Heart left ventricle (tissue), 16 donors: ENCODE measurements at regions of chr4 and their contacts with region 1.

Region 1: GRCh38 chr4:40149960-40150385 is 46.9 kb upstream of the RHOH start:
- DNase-seq: peak in 4 of 5 donors; percentile 35 to 45 (median 38)
- ATAC-seq: peak in 3 of 4 donors; percentile 61 to 73 (median 69)
- H3K4me3 ChIP-seq: no peak overlapping the region
- H3K27ac ChIP-seq: no peak overlapping the region
- H3K4me1 ChIP-seq: peaks cover 0 to 6% (median 0%) of the 10 kb centered on the region in 12 donors
- H3K27me3 ChIP-seq: no peaks in the 10 kb centered on the region
- CTCF ChIP-seq: peak; percentile 73 to 94 (median 85)
- POLR2A ChIP-seq: no peak

Region 2: GRCh38 chr4:40719008-40719623 is 569.1 kb after region 1 on chr4:
- intact Hi-C with region 1: loop called in 1 of 10 experiments (anchors 10 kb)
- DNase-seq: no peak
- ATAC-seq: no peak
- H3K4me3 ChIP-seq: no peak overlapping the region
- H3K27ac ChIP-seq: no peak overlapping the region
- H3K4me1 ChIP-seq: peaks cover 0 to 45% (median 0%) of the 10 kb centered on the region in 12 donors
- H3K27me3 ChIP-seq: peaks cover 0 to 15% (median 0%) of the 10 kb centered on the region in 9 donors
- CTCF ChIP-seq: peak in 5 of 12 donors; percentile 14 to 26 (median 20)
- POLR2A ChIP-seq: no peak